Naive thymus-derived CD4-positive, alpha-beta T cell (primary cell): ENCODE measurements at regions of chr3 and their contacts with region 1.

Region 1: DNA sequence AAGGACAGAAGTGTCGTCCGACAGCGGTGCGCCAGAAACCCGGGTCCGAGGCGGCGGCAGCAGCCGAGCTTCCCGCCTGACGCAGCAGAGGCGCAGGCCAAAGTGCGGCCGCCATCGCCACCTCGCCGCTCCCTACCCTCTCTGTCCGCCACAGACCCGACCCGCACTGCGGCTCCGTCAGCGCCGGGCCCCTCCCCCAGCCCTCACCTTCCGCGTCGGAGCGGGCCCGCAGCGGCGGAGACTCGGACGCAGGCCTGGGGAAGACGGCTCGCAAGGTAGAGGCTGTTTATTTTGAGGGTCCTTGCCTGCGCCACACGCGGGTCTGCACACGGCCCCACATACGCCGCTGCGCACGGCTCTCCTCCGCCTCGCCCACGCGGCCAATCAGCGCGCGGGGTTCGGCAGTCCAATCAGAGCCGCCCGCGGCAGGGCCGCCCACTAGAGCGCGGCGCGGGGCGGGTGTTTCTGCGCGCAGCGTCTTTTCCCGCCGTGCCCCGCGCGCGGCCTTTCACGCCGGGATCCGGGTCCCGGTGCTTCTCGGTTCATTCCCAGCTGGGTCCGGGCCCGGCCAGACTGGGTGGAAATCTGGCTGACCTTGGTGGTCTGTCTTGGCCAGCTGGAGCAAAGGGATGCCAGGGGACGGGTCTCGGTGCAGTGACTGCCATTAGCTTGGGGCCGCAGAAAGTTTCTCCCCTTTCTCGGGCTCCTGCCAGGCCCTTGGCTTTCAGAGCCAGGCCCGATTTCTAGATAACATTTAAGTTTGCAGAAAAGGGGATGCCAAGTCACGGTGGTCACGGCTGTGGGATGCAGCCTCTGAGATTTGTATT is at the start of gene CNBP:
- DNase-seq: peak; percentile 90 to 96 (median 94)
- ATAC-seq: peak; percentile 100
- H3K4me3 ChIP-seq: peak within 1 kb of the TSS; percentile 74
- H3K4me3 Mint-ChIP-seq: peak within 1 kb of the TSS; percentile 93 to 99 (median 96)
- H3K27ac ChIP-seq: peak within 1 kb of the TSS; percentile 100
- H3K27ac Mint-ChIP-seq: peak within 1 kb of the TSS; percentile 91 to 99 (median 97)
- H3K4me1 ChIP-seq: peaks cover 18 to 27% of the 10 kb centered on the region in 2 donors
- H3K4me1 Mint-ChIP-seq: peaks cover 32 to 48% (median 42%) of the 10 kb centered on the region in 7 donors
- H3K27me3 ChIP-seq: no peaks in the 10 kb centered on the region
- H3K27me3 Mint-ChIP-seq: no peaks in the 10 kb centered on the region
- total RNA-seq, gene CNBP: 259 to 366 (median 327) TPM

Region 2: GRCh38 chr3:128804017-128804810 is 379.6 kb before region 1 on chr3:
- CTCF ChIA-PET with region 1: no interaction called
- POLR2A ChIA-PET with region 1: no interaction called
- intact Hi-C with region 1: loop called in 1 of 2 experiments (anchors 5 kb)
- DNase-seq: peak in 8 of 9 donors; percentile 54 to 88 (median 84)
- ATAC-seq: peak; percentile 92
- H3K4me3 ChIP-seq: peak overlapping the region; percentile 49
- H3K4me3 Mint-ChIP-seq: peak overlapping the region; percentile 48 to 89 (median 80)
- H3K27ac ChIP-seq: peak overlapping the region; percentile 74
- H3K27ac Mint-ChIP-seq: peak overlapping the region; percentile 91 to 98 (median 96)
- H3K4me1 ChIP-seq: peaks cover 22 to 64% of the 10 kb centered on the region in 2 donors
- H3K4me1 Mint-ChIP-seq: peaks cover 59 to 91% (median 85%) of the 10 kb centered on the region in 7 donors
- H3K27me3 ChIP-seq: no peaks in the 10 kb centered on the region
- H3K27me3 Mint-ChIP-seq: no peaks in the 10 kb centered on the region

Region 3: DNA sequence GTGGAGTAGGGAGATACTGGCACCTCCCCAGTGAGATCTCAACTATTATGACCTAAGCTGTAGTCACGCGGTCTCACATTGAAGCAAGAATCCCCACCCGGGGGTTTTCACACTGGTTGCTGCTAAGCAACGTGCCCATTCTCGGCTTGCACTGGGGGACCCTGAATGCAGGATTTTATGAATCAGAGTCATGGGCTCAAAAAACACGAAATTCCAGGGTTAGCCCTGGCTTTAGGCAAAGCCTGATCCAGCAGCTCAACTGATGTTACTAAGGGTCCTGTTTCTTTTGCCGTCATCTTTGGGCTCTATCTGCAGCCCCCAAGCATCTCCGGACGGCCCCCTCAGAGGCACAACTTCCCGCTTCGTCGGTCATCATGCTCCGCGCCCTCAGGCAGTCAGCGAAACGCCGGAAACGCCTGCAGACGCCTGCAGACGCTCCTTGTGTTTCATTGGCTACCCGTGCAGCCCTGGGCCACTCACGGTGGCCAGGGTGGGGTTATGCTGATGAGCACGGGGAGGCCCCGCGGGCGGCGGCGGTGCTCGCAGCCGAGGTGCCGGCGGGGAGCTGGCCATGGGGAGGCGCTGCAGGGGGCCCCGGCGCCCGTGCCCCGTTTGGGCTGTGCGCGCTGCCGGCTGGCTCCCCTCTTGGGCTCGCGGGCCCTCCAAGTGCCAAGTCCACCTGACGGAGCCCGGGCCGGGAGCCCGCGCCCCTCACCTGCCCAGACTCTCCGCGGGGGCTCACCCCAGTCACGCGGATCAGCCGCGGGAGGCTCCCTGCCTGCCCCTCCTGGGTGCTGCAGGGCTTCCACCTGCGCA is 156.8 kb before region 1 on chr3:
- CTCF ChIA-PET with region 1: no interaction called
- POLR2A ChIA-PET with region 1: interaction called, 4 read pairs
- intact Hi-C with region 1: loop called (anchors 1 kb)
- DNase-seq: peak; percentile 84 to 94 (median 93)
- ATAC-seq: peak; percentile 99
- H3K4me3 ChIP-seq: peak overlapping the region; percentile 67
- H3K4me3 Mint-ChIP-seq: peak overlapping the region; percentile 69 to 88 (median 86)
- H3K27ac ChIP-seq: peak overlapping the region; percentile 74
- H3K27ac Mint-ChIP-seq: peak overlapping the region; percentile 82 to 97 (median 93)
- H3K4me1 ChIP-seq: peaks cover 8 to 11% of the 10 kb centered on the region in 2 donors
- H3K4me1 Mint-ChIP-seq: peaks cover 13 to 31% (median 25%) of the 10 kb centered on the region in 7 donors
- H3K27me3 ChIP-seq: no peaks in the 10 kb centered on the region
- H3K27me3 Mint-ChIP-seq: peaks cover 0 to 3% (median 0%) of the 10 kb centered on the region in 5 donors

Region 4: DNA sequence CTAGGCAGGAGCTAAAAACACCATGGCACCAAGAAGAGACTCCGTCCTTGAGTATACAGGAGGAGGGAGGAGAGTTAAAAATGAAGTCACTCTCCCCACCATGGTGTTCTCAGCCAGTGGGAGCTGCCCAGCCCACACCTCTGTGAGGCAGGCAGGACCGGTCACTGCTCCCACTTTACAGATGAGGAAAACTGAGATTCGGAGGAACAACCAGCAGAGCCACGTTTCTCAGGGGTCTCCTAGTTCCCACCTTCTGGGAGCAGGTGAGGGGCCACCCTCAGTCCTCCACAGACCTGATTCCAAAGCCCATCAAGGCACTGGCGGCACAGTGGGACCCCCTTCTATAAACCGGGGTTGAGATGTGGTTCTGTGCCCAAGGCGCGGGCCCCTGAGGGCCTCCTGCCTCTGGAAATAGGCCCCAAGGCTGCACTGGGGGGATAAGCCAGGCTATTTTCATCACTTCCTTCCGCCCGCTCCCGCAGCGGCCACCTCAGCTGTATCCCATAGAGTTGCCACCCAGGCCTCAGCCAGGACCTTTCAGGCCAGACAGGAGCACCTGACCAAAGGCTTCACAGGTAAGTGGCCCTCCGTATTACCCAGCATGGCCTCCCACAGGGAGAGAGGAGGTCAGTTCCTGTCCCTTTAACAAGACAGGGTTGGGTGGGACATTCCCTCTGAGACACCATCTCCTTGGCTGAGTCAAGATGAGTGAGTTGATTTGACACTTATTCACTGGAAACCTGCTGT is 123.3 kb before region 1 on chr3 and contains the start of gene GP9:
- CTCF ChIA-PET with region 1: no interaction called
- POLR2A ChIA-PET with region 1: no interaction called
- intact Hi-C with region 1: no loop called
- DNase-seq: no peak
- ATAC-seq: no peak
- H3K4me3 ChIP-seq: no peak within 1 kb of the TSS
- H3K4me3 Mint-ChIP-seq: no peak within 1 kb of the TSS
- H3K27ac ChIP-seq: no peak within 1 kb of the TSS
- H3K27ac Mint-ChIP-seq: no peak within 1 kb of the TSS
- H3K4me1 ChIP-seq: no peaks in the 10 kb centered on the region
- H3K4me1 Mint-ChIP-seq: peaks cover 0 to 13% (median 5%) of the 10 kb centered on the region in 7 donors
- H3K27me3 ChIP-seq: no peaks in the 10 kb centered on the region
- H3K27me3 Mint-ChIP-seq: peaks cover 0 to 5% (median 0%) of the 10 kb centered on the region in 5 donors
- total RNA-seq, gene GP9: 2.5 TPM in 1 of 5 experiments, not detected in the others

Region 5: DNA sequence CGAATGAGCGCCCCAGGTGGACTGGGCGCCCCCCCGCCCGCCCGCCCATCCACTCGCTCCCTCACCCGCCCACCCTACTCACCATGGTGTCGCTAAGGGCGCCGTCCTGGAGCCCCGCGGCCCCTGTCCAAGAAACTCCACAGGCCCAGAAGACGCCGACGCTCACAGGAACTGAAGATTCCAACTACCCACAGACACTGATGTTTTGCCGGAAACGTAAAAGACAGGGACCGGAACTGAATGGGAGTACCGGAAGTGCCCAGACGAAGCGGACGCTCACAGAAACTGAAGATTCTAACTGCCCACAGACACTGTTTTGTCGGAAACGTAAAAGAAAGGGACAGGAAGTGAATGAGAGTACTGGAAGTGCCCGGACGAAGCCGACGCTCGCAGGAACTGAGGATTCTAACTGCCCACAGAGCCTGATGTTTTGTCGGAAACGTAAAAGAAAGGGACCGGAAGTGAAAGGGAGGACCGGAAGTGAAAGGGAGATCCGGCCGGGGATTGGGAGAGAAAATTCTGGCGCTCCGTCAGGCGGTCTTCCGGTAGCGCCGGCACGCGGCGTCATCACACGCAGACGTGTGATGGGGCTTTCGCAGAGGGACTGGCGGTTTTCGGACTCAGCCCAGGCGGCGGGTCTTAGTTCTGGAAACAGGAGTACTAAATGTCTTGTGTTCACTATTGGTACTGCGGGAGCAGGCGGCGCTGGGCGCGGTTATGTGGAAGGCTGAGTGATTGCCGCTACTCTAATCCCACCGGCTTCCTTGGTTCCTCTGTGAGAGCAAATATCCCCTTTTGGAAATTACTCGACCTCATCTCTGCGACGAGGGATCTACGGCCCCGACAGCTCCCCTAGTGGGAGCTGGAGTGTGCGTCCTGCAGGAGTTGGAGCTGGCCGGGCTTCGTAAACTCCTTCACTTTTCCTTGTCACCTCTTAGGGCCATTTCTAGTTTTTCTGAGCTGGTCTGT is 22.6 kb before region 1 on chr3 and contains the start of gene ISY1:
- CTCF ChIA-PET with region 1: interaction called, 8 read pairs
- POLR2A ChIA-PET with region 1: interaction called, 33 read pairs
- intact Hi-C with region 1: loop called (anchors 1 kb)
- DNase-seq: peak; percentile 68 to 92 (median 89)
- ATAC-seq: peak; percentile 90
- H3K4me3 ChIP-seq: peak within 1 kb of the TSS; percentile 94
- H3K4me3 Mint-ChIP-seq: peak within 1 kb of the TSS; percentile 84 to 100 (median 98)
- H3K27ac ChIP-seq: peak within 1 kb of the TSS; percentile 98
- H3K27ac Mint-ChIP-seq: peak within 1 kb of the TSS; percentile 97 to 100 (median 99)
- H3K4me1 ChIP-seq: peaks cover 22 to 24% of the 10 kb centered on the region in 2 donors
- H3K4me1 Mint-ChIP-seq: peaks cover 18 to 53% (median 40%) of the 10 kb centered on the region in 7 donors
- H3K27me3 ChIP-seq: no peaks in the 10 kb centered on the region
- H3K27me3 Mint-ChIP-seq: peaks cover 0 to 4% (median 0%) of the 10 kb centered on the region in 5 donors
- total RNA-seq, gene ISY1: 27.6 to 65.1 (median 37.4) TPM

Region 6: DNA sequence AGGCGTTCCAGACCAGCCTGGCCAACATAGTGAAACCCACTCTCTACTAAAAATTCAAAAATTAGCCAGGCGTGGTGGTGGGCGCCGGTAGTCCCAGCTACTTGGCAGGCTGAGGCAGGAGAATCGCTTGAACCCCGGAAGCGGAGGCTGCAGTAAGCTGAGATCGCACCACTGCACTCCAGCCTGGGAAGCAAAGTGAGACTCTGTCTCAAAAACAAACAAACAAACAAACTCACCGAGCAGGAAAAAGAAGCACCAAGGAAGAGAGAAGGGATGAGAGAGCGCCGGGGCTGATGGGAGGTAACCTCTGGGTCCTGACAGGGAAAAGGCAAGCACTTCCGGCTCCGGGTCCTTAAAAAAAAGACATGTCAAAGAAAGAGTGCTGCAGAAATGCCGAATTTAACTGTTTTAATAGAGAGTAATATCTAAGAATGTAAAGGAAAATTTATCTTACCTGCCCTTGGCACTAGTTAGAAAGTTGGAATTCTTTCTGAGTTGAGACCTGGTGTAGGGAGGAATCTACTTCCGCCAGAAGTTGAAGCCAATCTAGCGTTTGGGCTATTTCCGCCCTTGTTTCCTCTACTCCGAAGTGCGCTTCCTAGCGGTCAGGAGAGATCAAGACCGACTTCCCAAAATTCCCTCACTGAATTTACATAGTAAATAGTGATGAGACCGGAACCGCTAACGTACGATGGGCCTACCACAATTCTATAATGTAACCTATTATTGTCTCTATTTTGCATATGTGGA is 215.5 kb after region 1 on chr3:
- CTCF ChIA-PET with region 1: no interaction called
- POLR2A ChIA-PET with region 1: no interaction called
- intact Hi-C with region 1: loop called in 1 of 2 experiments (anchors 1 kb)
- DNase-seq: peak; percentile 34 to 89 (median 81)
- ATAC-seq: peak; percentile 91
- H3K4me3 ChIP-seq: peak overlapping the region; percentile 70
- H3K4me3 Mint-ChIP-seq: peak overlapping the region; percentile 89 to 100 (median 97)
- H3K27ac ChIP-seq: peak overlapping the region; percentile 88
- H3K27ac Mint-ChIP-seq: peak overlapping the region; percentile 94 to 100 (median 98)
- H3K4me1 ChIP-seq: peaks cover 10 to 13% of the 10 kb centered on the region in 2 donors
- H3K4me1 Mint-ChIP-seq: peaks cover 23 to 47% (median 37%) of the 10 kb centered on the region in 7 donors
- H3K27me3 ChIP-seq: no peaks in the 10 kb centered on the region
- H3K27me3 Mint-ChIP-seq: no peaks in the 10 kb centered on the region